Right ventricle myocardium inferior (tissue), 1 donor: ENCODE measurements at regions of chr17 and their contacts with region 1.

Region 1: GRCh38 chr17:15999439-16000350 is at the starts of genes TTC19 and ZSWIM7:
- DNase-seq: peak; percentile 99
- ATAC-seq: peak; percentile 99
- total RNA-seq, gene TTC19: 18.9 TPM
- total RNA-seq, gene ZSWIM7: 24.8 TPM

Region 2: DNA sequence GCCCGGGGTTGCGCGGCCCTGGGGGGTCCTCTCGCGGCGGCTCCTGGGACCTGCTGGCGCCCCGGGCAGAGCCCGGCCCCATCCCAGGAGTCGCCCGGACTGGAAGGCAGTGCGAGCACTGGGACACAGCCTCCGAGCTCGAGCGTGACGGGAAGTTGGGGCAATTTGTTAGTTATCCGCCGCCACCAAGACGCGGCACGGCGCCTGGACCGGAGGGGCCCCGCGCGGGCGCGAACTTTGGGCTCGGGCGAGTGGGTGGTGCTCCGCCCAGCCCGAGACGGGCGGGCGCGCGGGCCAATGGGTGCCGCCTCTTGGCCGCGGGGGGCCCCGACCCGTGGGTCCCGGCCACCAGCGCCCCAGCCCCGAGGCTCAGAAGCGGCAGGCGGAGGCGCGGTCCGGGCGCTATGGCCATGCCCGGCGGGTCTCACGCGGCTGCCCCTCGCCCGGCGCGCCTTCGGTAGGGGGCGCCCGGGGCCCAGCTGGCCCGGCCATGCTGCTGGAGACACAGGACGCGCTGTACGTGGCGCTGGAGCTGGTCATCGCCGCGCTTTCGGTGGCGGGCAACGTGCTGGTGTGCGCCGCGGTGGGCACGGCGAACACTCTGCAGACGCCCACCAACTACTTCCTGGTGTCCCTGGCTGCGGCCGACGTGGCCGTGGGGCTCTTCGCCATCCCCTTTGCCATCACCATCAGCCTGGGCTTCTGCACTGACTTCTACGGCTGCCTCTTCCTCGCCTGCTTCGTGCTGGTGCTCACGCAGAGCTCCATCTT is 54.8 kb before region 1 on chr17 and contains the start of gene ADORA2B:
- intact Hi-C with region 1: loop called (anchors 10 kb)
- DNase-seq: peak; percentile 87
- ATAC-seq: peak; percentile 77
- total RNA-seq, gene ADORA2B: 0.43 TPM